ENCODE measurements at regions of chr2 and their contacts with region 1.

Region 1: DNA sequence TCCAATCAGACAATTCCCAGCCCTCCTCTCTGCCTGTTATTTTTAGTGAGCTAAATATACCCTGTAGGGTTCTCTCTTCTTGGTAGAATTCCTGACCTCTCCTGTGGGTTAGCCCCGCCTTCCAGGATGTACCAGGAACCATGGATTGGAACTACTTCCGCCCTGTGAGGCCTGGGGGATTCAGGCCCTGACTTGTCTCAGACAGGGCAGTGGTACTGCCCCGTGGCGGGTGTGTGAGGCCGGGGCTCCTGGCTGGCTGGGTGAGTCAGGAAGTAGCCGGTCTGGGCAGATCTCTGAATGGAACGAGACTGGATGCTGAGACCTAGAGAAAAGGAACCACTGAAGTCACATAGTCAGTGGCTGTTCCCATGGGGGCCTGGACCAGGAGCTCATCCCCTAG is 50.5 kb downstream of the DYSF start:
- DNase-seq: peak; percentile 62
- H3K4me3 ChIP-seq: no peak overlapping the region
- H3K27ac ChIP-seq: peak overlapping the region; percentile 85
- H3K4me1 ChIP-seq: peaks cover 54% of the 10 kb centered on the region
- H3K27me3 ChIP-seq: no peaks in the 10 kb centered on the region
- CTCF ChIP-seq: no peak
- POLR2A ChIP-seq: peak; percentile 70

Region 2: DNA sequence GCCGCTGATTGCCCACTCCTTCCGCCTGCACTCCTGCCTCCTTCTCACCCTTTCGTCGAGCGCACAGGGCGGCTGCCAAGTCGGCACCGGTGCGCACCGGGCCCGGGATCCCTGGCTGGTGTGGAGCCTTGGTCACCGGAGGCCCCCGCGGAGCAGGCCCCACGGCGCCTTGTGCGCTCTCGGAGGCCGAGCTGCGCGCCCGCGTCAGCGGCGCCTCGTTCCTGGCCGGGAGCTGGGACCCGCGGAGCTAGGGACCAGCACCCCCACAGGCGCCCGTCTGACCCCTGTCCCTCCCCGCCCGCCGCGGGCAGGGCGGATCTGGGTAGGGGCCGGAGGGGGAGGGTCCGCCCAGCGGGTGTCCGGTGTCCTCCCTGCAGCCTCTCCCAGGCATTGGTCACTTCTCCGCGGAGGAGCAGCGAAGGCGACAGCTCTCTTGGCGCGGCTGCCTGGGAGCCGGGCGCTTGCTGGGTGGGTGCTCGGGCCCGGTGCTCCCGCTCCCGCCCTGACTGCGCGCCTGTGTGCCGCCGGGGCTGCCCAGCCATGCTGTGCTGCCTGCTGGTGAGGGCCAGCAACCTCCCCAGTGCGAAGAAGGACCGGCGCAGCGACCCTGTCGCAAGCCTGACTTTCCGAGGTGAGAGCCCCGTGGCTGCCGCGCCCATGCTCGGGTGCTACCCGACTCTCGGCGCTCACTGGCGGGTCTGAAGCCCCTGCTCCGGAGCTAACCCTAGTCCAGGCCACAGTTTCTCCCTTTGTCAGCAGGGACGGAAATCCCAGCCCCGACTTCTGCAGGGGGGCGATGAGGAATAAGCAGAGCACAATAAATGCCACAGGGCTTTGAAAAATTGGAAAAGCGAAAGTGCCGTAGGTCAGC is 37.3 kb before region 1 on chr2:
- CTCF ChIA-PET with region 1: interaction called, 670 read pairs
- POLR2A ChIA-PET with region 1: interaction called, 3 read pairs
- dilution Hi-C with region 1: no loop called
- intact Hi-C with region 1: loop called (anchors 1 kb)
- DNase-seq: peak; percentile 52
- H3K4me3 ChIP-seq: peak overlapping the region; percentile 65 to 98 (median 83)
- H3K27ac ChIP-seq: peak overlapping the region; percentile 65
- H3K4me1 ChIP-seq: peaks cover 34% of the 10 kb centered on the region
- H3K27me3 ChIP-seq: no peaks in the 10 kb centered on the region
- CTCF ChIP-seq: no peak
- POLR2A ChIP-seq: peak; percentile 69